AG04450 (cell line): ENCODE measurements at regions of chr1 and their contacts with region 1.

Region 1: GRCh38 chr1:17207966-17208418 is 3.1 kb downstream of the PADI1 start:
- DNase-seq: no peak
- H3K4me3 ChIP-seq: no peak overlapping the region
- H3K27ac ChIP-seq: no peak overlapping the region
- H3K27me3 ChIP-seq: no peaks in the 10 kb centered on the region
- CTCF ChIP-seq: no peak

Region 2: DNA sequence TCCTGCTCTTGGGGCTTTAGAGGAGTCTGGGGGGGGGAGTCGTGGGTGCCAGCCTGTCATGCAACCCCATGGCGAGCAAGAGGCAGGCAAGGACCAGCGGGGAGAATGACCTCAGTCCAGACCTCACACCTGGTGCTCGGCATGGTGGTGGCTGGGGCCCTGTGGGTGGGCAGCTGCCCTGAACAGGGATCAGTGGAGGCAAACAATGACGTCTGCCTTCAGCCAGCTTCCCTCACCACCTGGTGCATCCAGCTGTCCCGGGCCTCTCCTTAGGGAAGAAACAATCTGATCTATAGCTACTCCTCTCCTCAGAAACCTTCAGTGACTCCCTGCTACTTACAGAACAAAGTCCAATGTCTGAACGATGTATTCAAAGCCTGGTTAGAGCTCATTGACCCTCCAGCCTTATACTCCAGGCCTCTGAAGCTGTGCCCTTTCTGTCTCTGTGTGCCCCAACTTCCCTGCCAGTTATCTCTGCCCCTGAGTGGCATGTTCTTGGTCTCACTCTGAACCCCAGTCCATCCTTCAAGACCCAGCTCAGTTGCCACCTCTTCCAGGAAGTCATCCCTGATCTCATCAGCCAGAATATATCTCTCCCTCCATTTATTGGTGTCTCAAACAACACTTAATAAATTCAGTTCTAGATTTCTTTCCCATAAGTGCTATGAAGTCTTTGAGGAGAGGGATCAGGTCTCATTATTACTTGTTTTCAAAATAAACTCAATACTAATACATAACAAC is 95.3 kb before region 1 on chr1:
- CTCF ChIA-PET with region 1: interaction called, 12 read pairs
- POLR2A ChIA-PET with region 1: no interaction called
- DNase-seq: no peak
- H3K4me3 ChIP-seq: no peak overlapping the region
- H3K27ac ChIP-seq: no peak overlapping the region
- H3K27me3 ChIP-seq: peaks cover 41% of the 10 kb centered on the region
- CTCF ChIP-seq: no peak

Region 3: DNA sequence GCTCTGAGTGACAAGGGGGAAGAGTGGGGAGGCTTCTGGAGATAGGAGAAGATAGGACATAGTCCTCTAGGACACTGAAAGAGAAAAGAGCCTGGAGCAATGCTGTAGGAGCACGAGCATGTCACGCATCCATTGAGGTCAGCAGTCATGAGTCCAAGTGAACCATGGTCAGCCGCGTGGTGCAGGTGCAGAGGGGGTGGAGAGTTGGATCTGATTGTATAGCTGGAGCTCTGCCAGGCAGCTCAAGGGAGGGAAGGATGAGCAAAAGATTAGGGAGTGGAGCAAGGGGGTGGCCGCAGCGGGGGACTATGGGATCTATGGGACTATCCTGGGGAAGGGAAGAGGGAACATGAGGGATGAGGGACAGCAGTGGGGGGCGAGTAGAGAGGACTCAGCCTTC is 10.9 kb after region 1 on chr1:
- CTCF ChIA-PET with region 1: no interaction called
- POLR2A ChIA-PET with region 1: no interaction called
- DNase-seq: no peak
- H3K4me3 ChIP-seq: no peak overlapping the region
- H3K27ac ChIP-seq: no peak overlapping the region
- H3K27me3 ChIP-seq: peaks cover 36% of the 10 kb centered on the region
- CTCF ChIP-seq: no peak